IMR-90 (cell line): ENCODE measurements at regions of chr5 and their contacts with region 1.

Region 1: DNA sequence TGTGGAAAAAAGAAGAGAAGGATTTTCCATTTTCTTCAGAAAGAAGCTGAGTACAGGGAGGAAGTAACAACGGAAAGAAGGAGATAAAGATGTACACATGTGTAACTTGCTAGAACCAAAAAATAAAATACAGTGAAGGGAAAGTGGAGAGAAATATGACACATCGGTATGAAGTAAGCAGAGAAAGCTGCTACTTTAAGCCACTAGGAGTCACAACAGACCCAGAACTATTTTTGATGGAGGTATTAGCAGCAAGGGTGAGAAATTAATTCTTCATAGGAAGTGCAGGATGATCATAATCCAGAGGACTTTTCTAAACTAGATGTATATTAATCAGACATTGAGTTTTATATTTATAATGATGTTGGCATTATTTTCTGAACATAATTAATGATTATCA is 88.5 kb downstream of the FAM174A start:
- DNase-seq: peak; percentile 25
- ATAC-seq: peak; percentile 51; the same call in 1 of the 2 replicates
- H3K4me3 ChIP-seq: no peak overlapping the region
- H3K27ac ChIP-seq: no peak overlapping the region
- H3K4me1 ChIP-seq: no peaks in the 10 kb centered on the region
- H3K27me3 ChIP-seq: no peaks in the 10 kb centered on the region
- CTCF ChIP-seq: peak; percentile 45
- POLR2A ChIP-seq: no peak
- RAD21 ChIP-seq: peak; percentile 55

Region 2: DNA sequence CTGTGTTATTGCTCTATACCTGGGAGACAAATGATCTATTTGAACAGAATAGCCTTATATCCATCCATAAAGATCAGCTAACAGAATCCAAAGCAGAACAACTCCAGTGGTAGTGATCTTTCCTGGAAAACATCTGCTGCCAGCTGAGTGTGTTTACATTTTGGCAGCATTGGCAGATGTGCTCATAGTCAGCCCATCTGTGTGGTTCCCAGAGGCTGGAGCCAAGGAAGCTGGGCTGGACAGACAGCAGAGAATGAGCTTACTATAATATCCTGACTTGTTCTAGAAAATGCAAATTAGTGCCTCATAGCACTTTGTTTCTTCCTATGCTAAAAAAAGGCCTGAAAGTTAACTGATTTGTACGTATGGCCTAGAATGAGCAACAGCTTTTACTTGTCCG is 179.7 kb after region 1 on chr5:
- CTCF ChIA-PET with region 1: no interaction called
- POLR2A ChIA-PET with region 1: no interaction called
- dilution Hi-C with region 1: no loop called
- in situ Hi-C with region 1: no loop called
- intact Hi-C with region 1: no loop called
- DNase-seq: peak; percentile 44
- ATAC-seq: peak; percentile 75
- H3K4me3 ChIP-seq: no peak overlapping the region
- H3K27ac ChIP-seq: no peak overlapping the region
- H3K4me1 ChIP-seq: no peaks in the 10 kb centered on the region
- H3K27me3 ChIP-seq: no peaks in the 10 kb centered on the region
- CTCF ChIP-seq: no peak
- POLR2A ChIP-seq: no peak
- RAD21 ChIP-seq: no peak

Region 3: GRCh38 chr5:100890461-100891008 is 266.8 kb after region 1 on chr5:
- CTCF ChIA-PET with region 1: no interaction called
- POLR2A ChIA-PET with region 1: no interaction called
- dilution Hi-C with region 1: no loop called
- in situ Hi-C with region 1: no loop called
- intact Hi-C with region 1: loop called (anchors 5 kb)
- DNase-seq: no peak
- ATAC-seq: no peak
- H3K4me3 ChIP-seq: no peak overlapping the region
- H3K27ac ChIP-seq: no peak overlapping the region
- H3K4me1 ChIP-seq: no peaks in the 10 kb centered on the region
- H3K27me3 ChIP-seq: no peaks in the 10 kb centered on the region
- CTCF ChIP-seq: no peak
- POLR2A ChIP-seq: no peak
- RAD21 ChIP-seq: no peak

Region 4: GRCh38 chr5:101385276-101385675 is 761.6 kb after region 1 on chr5:
- CTCF ChIA-PET with region 1: no interaction called
- POLR2A ChIA-PET with region 1: no interaction called
- dilution Hi-C with region 1: no loop called
- in situ Hi-C with region 1: no loop called
- intact Hi-C with region 1: loop called (anchors 5 kb)
- DNase-seq: no peak
- ATAC-seq: no peak
- H3K4me3 ChIP-seq: no peak overlapping the region
- H3K27ac ChIP-seq: no peak overlapping the region
- H3K4me1 ChIP-seq: no peaks in the 10 kb centered on the region
- H3K27me3 ChIP-seq: no peaks in the 10 kb centered on the region
- CTCF ChIP-seq: no peak
- POLR2A ChIP-seq: no peak
- RAD21 ChIP-seq: no peak

Region 5: DNA sequence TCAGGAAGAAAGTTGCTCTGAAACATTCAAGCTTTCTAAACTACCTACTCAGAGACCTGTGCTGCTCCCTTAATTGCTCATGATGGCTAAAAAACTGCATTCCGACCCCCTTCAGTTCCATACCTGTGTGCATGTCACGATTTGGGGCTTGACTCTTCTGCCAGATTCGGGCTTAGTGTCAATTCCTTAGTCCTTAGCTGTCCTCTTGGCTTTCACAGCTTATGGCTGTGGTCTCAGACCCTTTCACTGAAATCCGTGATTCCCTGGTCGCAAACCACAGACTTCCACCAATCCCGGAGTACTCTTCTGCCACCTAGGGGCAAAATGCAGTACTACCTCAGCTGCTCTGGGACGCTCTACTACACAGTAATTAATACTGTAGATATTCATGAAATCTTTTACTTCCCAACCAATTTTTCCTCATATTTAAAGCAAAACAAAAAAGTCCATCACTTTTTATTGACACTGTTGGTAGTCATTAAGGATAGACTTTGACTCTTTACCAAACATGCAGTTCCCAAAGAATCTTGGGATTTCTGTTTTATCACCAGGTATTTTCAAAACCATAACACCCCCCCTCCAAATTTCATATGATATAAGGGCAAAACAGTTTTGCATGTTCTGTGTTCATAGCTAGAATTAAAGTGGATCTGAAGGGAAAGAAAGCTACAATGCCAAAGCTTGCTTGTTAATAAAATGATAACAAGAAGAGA is 1054.9 kb after region 1 on chr5:
- CTCF ChIA-PET with region 1: no interaction called
- POLR2A ChIA-PET with region 1: no interaction called
- dilution Hi-C with region 1: no loop called
- in situ Hi-C with region 1: no loop called
- intact Hi-C with region 1: loop called (anchors 1 kb)
- DNase-seq: peak; percentile 47
- ATAC-seq: peak; percentile 92
- H3K4me3 ChIP-seq: no peak overlapping the region
- H3K27ac ChIP-seq: no peak overlapping the region
- H3K4me1 ChIP-seq: no peaks in the 10 kb centered on the region
- H3K27me3 ChIP-seq: no peaks in the 10 kb centered on the region
- CTCF ChIP-seq: peak; percentile 86
- POLR2A ChIP-seq: no peak
- RAD21 ChIP-seq: peak; percentile 78